HepG2 (cell line): ENCODE measurements at regions of chr3 and their contacts with region 1.

Region 1: DNA sequence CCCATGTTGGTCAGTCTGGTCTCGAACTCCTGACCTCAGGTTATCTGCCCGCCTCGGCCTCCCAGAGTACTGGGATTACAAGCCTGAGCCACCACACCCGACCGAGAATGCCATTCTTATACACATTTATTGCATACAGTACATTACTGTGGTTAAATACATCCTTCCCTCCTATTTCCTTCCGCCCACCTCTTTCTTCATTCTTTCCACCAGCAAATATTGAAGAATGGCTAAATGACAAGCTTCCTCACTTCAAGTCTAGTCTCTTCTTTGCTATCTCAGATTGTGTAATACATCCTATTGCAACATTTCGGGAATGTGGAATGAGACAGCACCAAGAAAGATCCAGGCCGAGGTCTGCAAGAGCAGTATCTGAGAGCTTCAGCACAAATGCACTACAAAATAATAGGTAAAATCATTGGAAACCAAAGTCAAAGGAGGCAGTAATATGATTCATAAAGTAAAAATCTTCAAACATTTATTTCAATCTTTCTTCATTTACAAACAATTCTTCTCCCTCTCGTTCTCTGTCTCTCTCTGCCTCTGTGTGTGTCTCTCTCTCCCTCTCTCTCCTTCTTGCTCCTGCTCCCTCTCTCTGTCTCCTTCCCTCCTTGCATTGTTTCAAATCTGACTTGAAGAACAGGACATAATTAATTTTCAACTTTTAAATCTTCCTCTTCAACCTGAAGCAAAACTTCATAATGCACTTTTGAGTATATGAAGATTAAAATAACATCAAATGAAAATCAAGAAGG is 94.7 kb upstream of the TGFBR2 start:
- DNase-seq: peak; percentile 83
- ATAC-seq: peak; percentile 85
- H3K4me3 ChIP-seq: no peak overlapping the region; a peak in 1 of 6 replicates
- H3K27ac ChIP-seq: peak overlapping the region; percentile 44
- H3K4me1 ChIP-seq: peaks cover 37% of the 10 kb centered on the region
- H3K27me3 ChIP-seq: no peaks in the 10 kb centered on the region
- CTCF ChIP-seq: no peak
- EP300 ChIP-seq: peak; percentile 55 to 90; a peak in 3 of 4 replicates
- POLR2A ChIP-seq: no peak
- RAD21 ChIP-seq: no peak

Region 2: DNA sequence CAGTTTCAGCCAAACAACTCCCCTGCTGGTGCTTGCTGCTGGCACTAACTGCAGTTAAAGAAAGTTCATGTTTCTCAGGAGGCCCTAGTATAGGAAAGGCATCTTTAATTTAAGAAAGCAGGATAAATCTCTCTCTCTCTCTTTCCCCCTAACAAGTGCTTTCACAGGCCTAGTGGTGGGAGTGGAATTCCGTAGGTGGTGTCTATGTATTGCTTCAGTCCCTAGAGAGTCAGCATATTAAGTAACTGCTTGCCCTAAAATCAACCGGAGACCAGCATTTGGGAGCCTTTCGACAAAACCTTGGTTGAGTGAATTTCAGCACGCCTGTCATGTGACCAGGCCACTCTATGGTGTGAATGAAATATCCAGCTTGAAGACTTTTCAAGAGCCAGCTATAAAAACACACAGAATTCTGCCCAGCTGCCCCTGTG is 74.5 kb before region 1 on chr3:
- CTCF ChIA-PET with region 1: no interaction called
- POLR2A ChIA-PET with region 1: no interaction called
- in situ Hi-C with region 1: no loop called
- intact Hi-C with region 1: no loop called
- DNase-seq: no peak
- ATAC-seq: no peak
- H3K4me3 ChIP-seq: no peak overlapping the region
- H3K27ac ChIP-seq: no peak overlapping the region
- H3K4me1 ChIP-seq: peaks cover 19% of the 10 kb centered on the region
- H3K27me3 ChIP-seq: no peaks in the 10 kb centered on the region
- CTCF ChIP-seq: no peak
- EP300 ChIP-seq: no peak
- POLR2A ChIP-seq: no peak
- RAD21 ChIP-seq: no peak

Region 3: DNA sequence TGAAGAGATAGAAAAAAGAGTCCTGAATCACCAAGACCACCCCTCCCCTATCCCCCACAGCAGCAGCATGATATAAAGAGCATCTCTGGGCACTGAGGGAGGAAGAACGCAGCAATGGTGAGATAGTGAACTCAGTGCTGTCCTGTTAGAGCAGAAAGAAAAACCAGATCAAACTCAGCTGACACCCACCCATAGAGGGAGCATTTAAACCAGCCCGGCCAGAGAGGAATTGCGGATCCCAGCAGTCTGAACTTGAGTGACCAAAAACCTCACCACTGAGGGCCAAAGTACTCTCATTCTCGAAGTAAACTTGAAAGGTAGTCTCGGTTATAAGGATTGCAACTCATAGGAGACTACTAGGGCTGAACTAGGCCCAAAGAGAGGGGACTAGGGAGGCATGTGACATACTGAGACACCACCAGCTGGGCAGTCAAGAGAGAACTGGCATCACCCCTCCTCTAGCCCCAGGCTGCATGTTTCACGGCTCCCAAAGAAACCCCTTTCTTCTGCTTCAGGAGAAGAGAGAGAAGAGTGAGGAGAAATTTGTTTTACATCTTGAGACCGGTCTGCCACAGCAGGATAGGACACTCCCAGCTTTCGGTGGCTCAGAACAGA is 55.5 kb after region 1 on chr3:
- CTCF ChIA-PET with region 1: no interaction called
- POLR2A ChIA-PET with region 1: no interaction called
- in situ Hi-C with region 1: no loop called
- intact Hi-C with region 1: loop called (anchors 2 kb)
- DNase-seq: peak; percentile 15
- ATAC-seq: peak; percentile 75
- H3K4me3 ChIP-seq: no peak overlapping the region
- H3K27ac ChIP-seq: no peak overlapping the region
- H3K4me1 ChIP-seq: peaks cover 10% of the 10 kb centered on the region; the same call in 1 of the 2 replicates
- H3K27me3 ChIP-seq: no peaks in the 10 kb centered on the region
- CTCF ChIP-seq: 0 out of 2 replicates have a peak, but pooled peaks have one; percentile 19
- EP300 ChIP-seq: no peak
- POLR2A ChIP-seq: no peak
- RAD21 ChIP-seq: no peak

Region 4: DNA sequence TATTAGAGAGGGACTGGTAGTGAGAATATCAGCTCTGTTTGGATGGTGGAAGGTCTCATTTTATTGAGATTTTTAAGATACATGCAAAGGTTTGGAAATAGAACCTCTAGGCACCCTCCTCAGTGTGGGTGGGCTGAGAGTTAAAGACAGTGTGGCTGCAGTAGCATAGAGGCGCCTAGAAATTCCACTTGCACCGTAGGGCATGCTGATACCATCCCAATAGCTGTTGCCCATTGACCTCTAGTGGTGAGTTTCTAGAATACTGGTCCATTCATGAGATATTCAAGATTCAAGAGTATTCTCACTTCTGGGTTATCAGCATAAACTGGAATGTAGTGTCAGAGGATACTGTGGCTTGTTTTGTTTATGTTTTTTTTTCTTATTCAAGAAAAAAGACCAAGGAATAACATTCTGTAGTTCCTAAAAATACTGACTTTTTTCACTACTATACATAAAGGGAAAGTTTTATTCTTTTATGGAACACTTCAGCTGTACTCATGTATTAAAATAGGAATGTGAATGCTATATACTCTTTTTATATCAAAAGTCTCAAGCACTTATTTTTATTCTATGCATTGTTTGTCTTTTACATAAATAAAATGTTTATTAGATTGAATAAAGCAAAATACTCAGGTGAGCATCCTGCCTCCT is 181.9 kb after region 1 on chr3:
- CTCF ChIA-PET with region 1: no interaction called
- POLR2A ChIA-PET with region 1: no interaction called
- in situ Hi-C with region 1: no loop called
- intact Hi-C with region 1: no loop called
- DNase-seq: peak; percentile 62
- ATAC-seq: peak; percentile 69
- H3K4me3 ChIP-seq: no peak overlapping the region
- H3K27ac ChIP-seq: peak overlapping the region; percentile 15
- H3K4me1 ChIP-seq: peaks cover 48% of the 10 kb centered on the region
- H3K27me3 ChIP-seq: no peaks in the 10 kb centered on the region
- CTCF ChIP-seq: peak; percentile 73
- EP300 ChIP-seq: no peak
- POLR2A ChIP-seq: no peak; a peak in 1 of 4 replicates
- RAD21 ChIP-seq: peak; percentile 73